Right ventricle myocardium superior (tissue), 1 donor: ENCODE measurements at regions of chr3 and their contacts with region 1.

Region 1: GRCh38 chr3:44045476-44046275 is 196.0 kb upstream of the TOPAZ1 start:
- DNase-seq: no peak
- ATAC-seq: no peak

Region 2: GRCh38 chr3:44104668-44105321 is 59.1 kb after region 1 on chr3:
- intact Hi-C with region 1: loop called (anchors 10 kb)
- DNase-seq: no peak
- ATAC-seq: no peak

Region 3: DNA sequence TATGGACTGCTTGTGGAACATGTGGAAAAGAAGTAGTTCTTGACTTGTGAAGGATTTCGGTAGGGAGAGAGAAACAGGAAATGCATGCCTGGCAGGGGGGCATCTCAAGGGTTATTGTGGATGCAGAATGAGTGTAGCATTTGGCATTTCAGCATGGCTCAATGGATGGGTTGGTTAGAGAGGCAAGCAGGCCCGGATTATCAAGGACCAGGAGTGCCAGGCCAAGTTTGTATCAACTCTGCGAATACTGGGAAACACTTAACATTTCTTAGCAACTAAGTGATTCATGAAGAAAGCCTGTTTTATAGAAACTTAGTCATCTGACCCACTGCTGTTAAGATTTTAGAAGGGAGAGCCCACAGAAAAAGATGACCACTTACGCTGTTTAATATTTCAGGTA is 749.5 kb after region 1 on chr3:
- intact Hi-C with region 1: no loop called
- DNase-seq: no peak
- ATAC-seq: no peak